CD8-positive, alpha-beta memory T cell (primary cell): ENCODE measurements at regions of chr11 and their contacts with region 1.

Region 1: DNA sequence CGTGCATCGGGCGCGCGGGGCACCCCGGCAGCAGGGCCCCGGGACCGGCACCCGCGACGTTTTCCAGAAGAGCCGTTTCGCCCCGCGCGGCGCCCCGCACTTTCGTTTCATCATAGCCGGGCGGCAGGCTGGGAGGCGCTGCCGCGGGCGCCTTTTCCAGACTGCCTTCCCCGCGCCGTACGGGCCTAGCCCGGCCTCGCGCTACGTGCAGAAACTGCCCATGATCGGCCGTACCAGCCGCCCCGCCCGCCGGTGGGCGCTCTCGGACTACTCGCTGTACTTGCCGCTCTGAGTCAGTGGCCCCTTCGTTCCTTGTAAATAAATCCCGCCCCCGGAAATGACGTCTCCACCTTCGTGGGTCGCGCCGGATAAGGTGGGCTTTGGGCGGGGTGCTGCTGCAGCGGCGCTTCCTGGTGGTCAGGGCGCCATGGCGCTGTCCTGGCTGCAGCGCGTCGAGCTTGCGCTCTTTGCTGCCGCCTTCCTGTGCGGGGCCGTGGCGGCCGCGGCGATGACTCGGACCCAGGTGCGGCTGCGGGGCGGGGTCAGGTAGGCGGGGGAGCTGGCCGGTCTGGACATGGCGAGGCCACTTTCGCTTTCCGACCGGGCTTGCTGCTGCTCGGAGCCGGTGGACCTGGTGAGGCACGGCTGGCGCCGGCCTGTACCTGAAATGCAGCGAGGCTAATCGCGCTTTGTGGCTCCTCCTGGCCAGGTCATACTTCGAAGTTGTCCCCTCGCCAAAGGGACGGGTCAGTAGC is at the start of gene TMEM179B:
- DNase-seq: peak; percentile 97 to 99 (median 97)
- H3K4me3 ChIP-seq: peak within 1 kb of the TSS; percentile 98
- H3K4me3 Mint-ChIP-seq: peak within 1 kb of the TSS; percentile 94 to 97 (median 95)
- H3K27ac ChIP-seq: peak within 1 kb of the TSS; percentile 96
- H3K27ac Mint-ChIP-seq: peak within 1 kb of the TSS; percentile 95 to 100 (median 96)
- H3K4me1 ChIP-seq: peaks cover 30% of the 10 kb centered on the region
- H3K4me1 Mint-ChIP-seq: peaks cover 41 to 55% (median 51%) of the 10 kb centered on the region in 3 donors
- H3K27me3 ChIP-seq: no peaks in the 10 kb centered on the region
- H3K27me3 Mint-ChIP-seq: no peaks in the 10 kb centered on the region
- total RNA-seq, gene TMEM179B: 46.4 to 49.2 TPM

Region 2: GRCh38 chr11:62705880-62706849 is 81.0 kb before region 1 on chr11:
- CTCF ChIA-PET with region 1: interaction called, 15 read pairs
- POLR2A ChIA-PET with region 1: interaction called, 11 read pairs
- DNase-seq: peak; percentile 92 to 98 (median 95)
- H3K4me3 ChIP-seq: peak overlapping the region; percentile 88
- H3K4me3 Mint-ChIP-seq: peak overlapping the region; percentile 86 to 95 (median 89)
- H3K27ac ChIP-seq: peak overlapping the region; percentile 95
- H3K27ac Mint-ChIP-seq: peak overlapping the region; percentile 92 to 99 (median 94)
- H3K4me1 ChIP-seq: peaks cover 48% of the 10 kb centered on the region
- H3K4me1 Mint-ChIP-seq: peaks cover 36 to 49% (median 41%) of the 10 kb centered on the region in 3 donors
- H3K27me3 ChIP-seq: no peaks in the 10 kb centered on the region
- H3K27me3 Mint-ChIP-seq: no peaks in the 10 kb centered on the region

Region 3: DNA sequence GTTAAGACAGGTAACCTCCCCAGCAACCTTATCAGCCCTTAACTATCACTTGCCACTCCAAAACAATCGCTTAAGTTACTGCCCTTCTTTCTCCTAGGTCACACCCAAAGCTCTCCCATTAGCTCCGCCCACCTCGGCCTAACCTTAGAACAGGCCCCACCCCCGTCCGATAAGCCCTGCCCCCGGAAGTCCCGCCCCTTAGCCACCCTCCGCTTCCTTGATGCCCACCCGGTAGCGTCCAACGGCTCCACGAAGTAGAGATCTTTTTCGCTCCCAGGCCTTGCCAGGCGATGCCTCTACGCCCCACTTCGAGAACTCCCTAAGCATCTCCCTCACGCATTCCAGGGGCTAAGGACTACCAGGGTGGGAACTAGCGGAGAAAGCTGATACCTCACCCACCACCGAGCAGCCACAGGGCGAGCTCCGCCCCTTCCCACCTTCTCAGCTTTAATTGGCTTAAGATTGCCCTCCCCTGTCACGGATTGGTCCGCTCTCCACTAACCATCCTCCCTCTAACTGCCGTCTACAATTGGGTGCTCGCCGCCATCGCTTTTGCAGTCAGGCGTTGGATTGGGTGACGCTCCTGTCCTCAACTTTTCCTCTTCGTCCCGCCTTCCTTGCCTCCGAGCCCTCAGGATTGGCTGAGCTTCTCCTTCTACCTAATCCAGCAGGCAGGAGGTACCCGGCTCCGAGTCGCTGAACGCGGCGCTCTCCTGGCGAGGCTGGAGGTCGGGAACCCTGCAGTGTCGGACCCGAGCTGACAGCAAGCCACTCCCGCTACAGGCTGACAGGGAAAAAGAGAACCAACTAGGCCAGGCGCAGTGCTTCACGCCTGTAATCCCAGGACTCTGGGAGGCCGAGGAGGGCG is 33.2 kb before region 1 on chr11 and contains the start of gene ZBTB3:
- CTCF ChIA-PET with region 1: interaction called, 36 read pairs
- POLR2A ChIA-PET with region 1: interaction called, 20 read pairs
- DNase-seq: peak; percentile 95 to 99 (median 98)
- H3K4me3 ChIP-seq: peak within 1 kb of the TSS; percentile 99
- H3K4me3 Mint-ChIP-seq: peak within 1 kb of the TSS; percentile 91 to 100 (median 99)
- H3K27ac ChIP-seq: peak within 1 kb of the TSS; percentile 91
- H3K27ac Mint-ChIP-seq: peak within 1 kb of the TSS; percentile 83 to 99 (median 98)
- H3K4me1 ChIP-seq: peaks cover 22% of the 10 kb centered on the region
- H3K4me1 Mint-ChIP-seq: peaks cover 24 to 40% (median 33%) of the 10 kb centered on the region in 3 donors
- H3K27me3 ChIP-seq: no peaks in the 10 kb centered on the region
- H3K27me3 Mint-ChIP-seq: no peaks in the 10 kb centered on the region
- total RNA-seq, gene ZBTB3: 9.4 to 11.6 TPM

Region 4: GRCh38 chr11:62799486-62799885 is 12.3 kb after region 1 on chr11:
- CTCF ChIA-PET with region 1: interaction called, 18 read pairs
- POLR2A ChIA-PET with region 1: interaction called, 14 read pairs
- DNase-seq: no peak
- H3K4me3 ChIP-seq: no peak overlapping the region
- H3K4me3 Mint-ChIP-seq: peak overlapping the region in 1 of 7 donors; percentile 45
- H3K27ac ChIP-seq: no peak overlapping the region
- H3K27ac Mint-ChIP-seq: no peak overlapping the region
- H3K4me1 ChIP-seq: peaks cover 17% of the 10 kb centered on the region
- H3K4me1 Mint-ChIP-seq: peaks cover 16 to 30% (median 17%) of the 10 kb centered on the region in 3 donors
- H3K27me3 ChIP-seq: no peaks in the 10 kb centered on the region
- H3K27me3 Mint-ChIP-seq: no peaks in the 10 kb centered on the region

Region 5: GRCh38 chr11:62831520-62832335 is 44.5 kb after region 1 on chr11 and contains the start of gene STX5:
- CTCF ChIA-PET with region 1: interaction called, 18 read pairs
- POLR2A ChIA-PET with region 1: interaction called, 23 read pairs
- DNase-seq: peak; percentile 99 to 100 (median 99)
- H3K4me3 ChIP-seq: peak within 1 kb of the TSS; percentile 96
- H3K4me3 Mint-ChIP-seq: peak within 1 kb of the TSS; percentile 93 to 100 (median 97)
- H3K27ac ChIP-seq: peak within 1 kb of the TSS; percentile 98
- H3K27ac Mint-ChIP-seq: peak within 1 kb of the TSS; percentile 96 to 100 (median 98)
- H3K4me1 ChIP-seq: peaks cover 29% of the 10 kb centered on the region
- H3K4me1 Mint-ChIP-seq: peaks cover 22 to 55% (median 35%) of the 10 kb centered on the region in 3 donors
- H3K27me3 ChIP-seq: no peaks in the 10 kb centered on the region
- H3K27me3 Mint-ChIP-seq: no peaks in the 10 kb centered on the region
- total RNA-seq, gene STX5: 34.7 to 35.3 TPM

Region 6: DNA sequence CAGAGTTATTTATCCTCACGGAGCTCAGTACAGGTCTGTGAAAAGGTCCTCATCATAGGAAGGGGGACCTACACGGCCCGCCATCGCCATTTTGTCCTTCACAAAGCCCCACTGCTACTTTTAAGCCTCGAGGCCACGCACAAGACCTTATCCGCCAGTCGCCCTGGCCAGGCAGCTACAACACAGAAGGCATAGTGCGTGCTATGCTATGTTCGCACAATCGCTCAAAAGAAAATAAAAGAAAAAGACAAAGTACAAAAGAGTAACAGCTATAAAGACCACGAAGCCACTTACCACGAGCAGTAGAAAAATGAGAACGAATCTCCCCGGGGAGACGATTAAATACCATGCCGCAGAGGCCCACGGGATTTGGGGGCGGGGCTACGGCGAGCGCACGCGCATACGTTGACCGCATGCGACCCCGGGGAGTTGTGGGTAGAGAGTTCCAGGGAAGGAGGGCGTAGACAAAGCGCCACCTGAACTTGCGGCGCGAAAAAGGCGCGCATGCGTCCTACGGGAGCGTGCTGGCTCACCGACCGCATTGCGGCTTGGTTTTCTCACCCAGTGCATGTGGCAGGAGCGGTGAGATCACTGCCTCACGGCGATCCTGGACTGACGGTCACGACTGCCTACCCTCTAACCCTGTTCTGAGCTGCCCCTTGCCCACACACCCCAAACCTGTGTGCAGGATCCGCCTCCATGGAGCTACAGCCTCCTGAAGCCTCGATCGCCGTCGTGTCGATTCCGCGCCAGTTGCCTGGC is 68.6 kb after region 1 on chr11:
- CTCF ChIA-PET with region 1: interaction called, 56 read pairs
- POLR2A ChIA-PET with region 1: interaction called, 37 read pairs
- DNase-seq: peak; percentile 94 to 99 (median 98)
- H3K4me3 ChIP-seq: peak overlapping the region; percentile 98
- H3K4me3 Mint-ChIP-seq: peak overlapping the region; percentile 94 to 99 (median 98)
- H3K27ac ChIP-seq: peak overlapping the region; percentile 94
- H3K27ac Mint-ChIP-seq: peak overlapping the region; percentile 84 to 96 (median 94)
- H3K4me1 ChIP-seq: peaks cover 47% of the 10 kb centered on the region
- H3K4me1 Mint-ChIP-seq: peaks cover 46 to 63% (median 55%) of the 10 kb centered on the region in 3 donors
- H3K27me3 ChIP-seq: no peaks in the 10 kb centered on the region
- H3K27me3 Mint-ChIP-seq: peaks cover 0 to 6% of the 10 kb centered on the region in 2 donors

Region 7: DNA sequence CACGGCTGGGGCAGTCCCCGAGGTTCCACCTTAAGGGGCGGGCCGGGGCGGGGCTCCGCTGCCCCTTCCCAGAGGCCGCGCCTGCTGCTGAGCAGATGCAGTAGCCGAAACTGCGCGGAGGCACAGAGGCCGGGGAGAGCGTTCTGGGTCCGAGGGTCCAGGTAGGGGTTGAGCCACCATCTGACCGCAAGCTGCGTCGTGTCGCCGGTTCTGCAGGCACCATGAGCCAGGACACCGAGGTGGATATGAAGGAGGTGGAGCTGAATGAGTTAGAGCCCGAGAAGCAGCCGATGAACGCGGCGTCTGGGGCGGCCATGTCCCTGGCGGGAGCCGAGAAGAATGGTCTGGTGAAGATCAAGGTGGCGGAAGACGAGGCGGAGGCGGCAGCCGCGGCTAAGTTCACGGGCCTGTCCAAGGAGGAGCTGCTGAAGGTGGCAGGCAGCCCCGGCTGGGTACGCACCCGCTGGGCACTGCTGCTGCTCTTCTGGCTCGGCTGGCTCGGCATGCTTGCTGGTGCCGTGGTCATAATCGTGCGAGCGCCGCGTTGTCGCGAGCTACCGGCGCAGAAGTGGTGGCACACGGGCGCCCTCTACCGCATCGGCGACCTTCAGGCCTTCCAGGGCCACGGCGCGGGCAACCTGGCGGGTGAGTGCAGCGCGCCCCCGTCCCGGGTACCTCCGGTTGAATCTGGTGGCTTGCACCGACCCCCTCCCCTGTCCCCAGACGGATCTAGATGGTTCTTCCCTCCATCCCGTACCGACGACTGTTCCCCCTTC is 93.8 kb after region 1 on chr11 and contains the start of gene SLC3A2:
- CTCF ChIA-PET with region 1: interaction called, 23 read pairs
- POLR2A ChIA-PET with region 1: interaction called, 48 read pairs
- DNase-seq: peak; percentile 82 to 89 (median 85)
- H3K4me3 ChIP-seq: peak within 1 kb of the TSS; percentile 99
- H3K4me3 Mint-ChIP-seq: peak within 1 kb of the TSS; percentile 99 to 100 (median 100)
- H3K27ac ChIP-seq: peak within 1 kb of the TSS; percentile 99
- H3K27ac Mint-ChIP-seq: peak within 1 kb of the TSS; percentile 96 to 100 (median 99)
- H3K4me1 ChIP-seq: peaks cover 39% of the 10 kb centered on the region
- H3K4me1 Mint-ChIP-seq: peaks cover 51 to 54% (median 54%) of the 10 kb centered on the region in 3 donors
- H3K27me3 ChIP-seq: no peaks in the 10 kb centered on the region
- H3K27me3 Mint-ChIP-seq: no peaks in the 10 kb centered on the region
- total RNA-seq, gene SLC3A2: 426 to 430 TPM